Naive thymus-derived CD4-positive, alpha-beta T cell (primary cell): ENCODE measurements at regions of chr20 and their contacts with region 1.

Region 1: DNA sequence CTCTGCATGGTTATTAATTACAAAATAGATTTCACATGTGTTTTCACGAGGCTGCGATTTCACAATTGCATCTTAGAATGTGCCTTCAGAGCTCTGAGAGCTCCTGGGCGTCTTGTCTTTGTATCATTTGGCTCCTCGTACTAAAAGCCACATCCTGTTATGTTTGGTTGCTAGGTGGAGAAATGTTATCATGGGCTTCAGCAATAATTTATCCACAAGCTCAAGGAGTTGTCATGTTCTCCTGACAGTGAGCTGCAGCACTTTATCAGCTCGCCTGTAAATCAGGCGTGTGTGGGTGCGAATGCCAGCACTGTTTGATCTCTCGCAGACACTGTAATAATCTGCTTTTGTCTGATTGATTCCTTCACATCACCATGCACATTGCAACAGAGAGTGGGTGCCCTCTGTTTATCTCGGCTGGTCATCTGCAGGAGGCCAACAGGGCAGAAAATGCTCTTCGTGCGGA is 218.6 kb upstream of the ZFP64 start:
- DNase-seq: peak in 8 of 9 donors; percentile 18 to 93 (median 87)
- ATAC-seq: peak; percentile 94
- H3K4me3 ChIP-seq: peak overlapping the region; percentile 30
- H3K4me3 Mint-ChIP-seq: peak overlapping the region; percentile 63 to 87 (median 82)
- H3K27ac ChIP-seq: peak overlapping the region; percentile 94
- H3K27ac Mint-ChIP-seq: peak overlapping the region; percentile 94 to 100 (median 99)
- H3K4me1 ChIP-seq: peaks cover 68 to 73% of the 10 kb centered on the region in 2 donors
- H3K4me1 Mint-ChIP-seq: peaks cover 34 to 88% (median 76%) of the 10 kb centered on the region in 7 donors
- H3K27me3 ChIP-seq: no peaks in the 10 kb centered on the region
- H3K27me3 Mint-ChIP-seq: no peaks in the 10 kb centered on the region

Region 2: DNA sequence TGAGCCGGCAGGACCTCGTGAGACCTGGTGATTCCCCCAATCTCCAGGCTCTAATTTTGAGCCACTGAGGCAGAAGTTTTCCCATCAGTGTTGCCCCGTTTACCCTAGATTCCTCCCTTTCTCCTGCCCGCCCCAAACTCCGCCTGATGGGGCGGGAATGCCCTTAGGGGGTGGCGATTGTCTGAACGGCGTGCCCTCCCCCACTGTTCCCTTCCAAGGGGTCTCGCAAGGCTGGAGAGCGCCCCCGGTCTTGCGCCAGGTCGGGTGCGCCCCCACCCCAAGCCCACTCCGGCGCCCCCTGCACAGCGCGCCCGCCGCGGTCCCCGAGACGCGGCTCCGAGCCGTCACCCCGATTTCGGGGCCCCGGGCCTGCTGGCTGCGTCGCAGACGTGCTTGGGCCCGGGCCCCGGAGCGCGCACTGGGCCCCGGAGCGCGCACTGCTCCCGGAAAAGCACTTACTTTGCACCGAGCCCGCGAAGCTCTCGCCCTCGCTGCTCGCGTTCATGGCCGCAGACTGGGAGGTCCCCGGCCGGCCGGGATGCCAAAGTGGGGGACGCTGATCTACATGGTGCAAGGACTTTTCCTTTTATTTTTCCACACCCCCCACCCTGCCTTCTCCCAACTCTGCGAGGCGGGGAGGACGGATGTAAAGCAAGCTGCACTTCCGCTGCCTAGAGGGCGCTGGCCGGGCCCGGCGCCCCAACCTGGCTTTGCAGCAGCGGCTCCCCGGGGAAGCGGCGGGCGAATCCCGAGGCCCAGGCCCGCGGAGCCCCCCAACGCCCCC is 218.9 kb before region 1 on chr20 and contains the start of gene ZFP64:
- CTCF ChIA-PET with region 1: no interaction called
- POLR2A ChIA-PET with region 1: interaction called, 3 read pairs
- intact Hi-C with region 1: loop called in 1 of 2 experiments (anchors 2 kb)
- DNase-seq: peak; percentile 72 to 85 (median 83)
- ATAC-seq: peak; percentile 89
- H3K4me3 ChIP-seq: peak within 1 kb of the TSS; percentile 88
- H3K4me3 Mint-ChIP-seq: peak within 1 kb of the TSS; percentile 81 to 96 (median 94)
- H3K27ac ChIP-seq: peak within 1 kb of the TSS; percentile 78
- H3K27ac Mint-ChIP-seq: peak within 1 kb of the TSS; percentile 86 to 95 (median 93)
- H3K4me1 ChIP-seq: peaks cover 0 to 10% of the 10 kb centered on the region in 2 donors
- H3K4me1 Mint-ChIP-seq: peaks cover 7 to 27% (median 18%) of the 10 kb centered on the region in 7 donors
- H3K27me3 ChIP-seq: no peaks in the 10 kb centered on the region
- H3K27me3 Mint-ChIP-seq: no peaks in the 10 kb centered on the region
- total RNA-seq, gene ZFP64: 8.0 to 14.6 (median 11.6) TPM

Region 3: GRCh38 chr20:52349806-52350205 is 60.4 kb before region 1 on chr20:
- CTCF ChIA-PET with region 1: interaction called, 3 read pairs
- POLR2A ChIA-PET with region 1: interaction called, 5 read pairs
- intact Hi-C with region 1: loop called in 1 of 2 experiments (anchors 2 kb)
- DNase-seq: no peak
- ATAC-seq: no peak
- H3K4me3 ChIP-seq: no peak overlapping the region
- H3K4me3 Mint-ChIP-seq: no peak overlapping the region
- H3K27ac ChIP-seq: no peak overlapping the region
- H3K27ac Mint-ChIP-seq: peak overlapping the region in 1 of 9 donors; percentile 34
- H3K4me1 ChIP-seq: no peaks in the 10 kb centered on the region
- H3K4me1 Mint-ChIP-seq: peaks cover 0 to 15% (median 9%) of the 10 kb centered on the region in 7 donors
- H3K27me3 ChIP-seq: no peaks in the 10 kb centered on the region
- H3K27me3 Mint-ChIP-seq: peaks cover 0 to 5% (median 0%) of the 10 kb centered on the region in 5 donors

Region 4: DNA sequence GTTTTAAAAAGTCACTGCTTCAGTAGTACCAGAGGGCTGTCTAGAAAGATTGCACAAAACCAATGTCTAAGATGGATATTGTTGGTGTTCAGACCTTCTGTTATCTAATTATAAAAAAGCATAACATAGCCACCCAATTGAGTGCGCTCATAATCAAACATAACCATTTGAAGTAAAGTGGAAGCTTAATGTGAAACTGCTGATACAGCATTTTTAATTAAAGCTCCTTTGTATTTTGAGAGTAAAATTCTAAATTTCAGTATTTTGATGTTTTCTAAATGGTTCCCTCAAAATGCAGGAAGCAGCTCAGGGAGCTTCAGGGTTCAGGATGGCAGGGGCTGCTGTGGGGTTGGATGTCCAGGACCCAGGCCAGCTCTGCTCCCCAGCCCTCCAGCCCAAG is 73.2 kb after region 1 on chr20:
- CTCF ChIA-PET with region 1: no interaction called
- POLR2A ChIA-PET with region 1: no interaction called
- intact Hi-C with region 1: no loop called
- DNase-seq: no peak
- ATAC-seq: no peak
- H3K4me3 ChIP-seq: no peak overlapping the region
- H3K4me3 Mint-ChIP-seq: no peak overlapping the region
- H3K27ac ChIP-seq: no peak overlapping the region
- H3K27ac Mint-ChIP-seq: peak overlapping the region in 1 of 9 donors; percentile 45
- H3K4me1 ChIP-seq: no peaks in the 10 kb centered on the region
- H3K4me1 Mint-ChIP-seq: peaks cover 0 to 8% (median 2%) of the 10 kb centered on the region in 7 donors
- H3K27me3 ChIP-seq: no peaks in the 10 kb centered on the region
- H3K27me3 Mint-ChIP-seq: no peaks in the 10 kb centered on the region

Region 5: DNA sequence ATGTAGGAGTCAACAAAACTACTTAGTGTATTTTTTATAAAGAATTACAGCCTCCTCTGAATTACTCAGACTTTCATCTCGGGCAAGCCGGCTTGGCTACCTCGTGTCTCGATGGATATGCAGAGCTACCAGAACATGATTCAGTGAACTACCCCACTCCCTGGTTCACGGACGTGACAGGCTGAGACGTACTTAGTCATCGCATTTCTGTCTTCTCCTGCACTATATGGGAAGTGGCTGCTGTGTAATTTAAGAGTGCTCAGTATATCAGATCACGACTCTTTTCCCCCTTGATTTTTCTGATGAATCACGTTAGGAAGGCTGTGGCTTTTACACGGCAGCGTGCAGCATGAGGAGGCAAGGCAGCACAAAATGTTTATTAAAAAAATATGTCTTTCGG is 84.0 kb after region 1 on chr20:
- CTCF ChIA-PET with region 1: no interaction called
- POLR2A ChIA-PET with region 1: interaction called, 4 read pairs
- intact Hi-C with region 1: loop called in 1 of 2 experiments (anchors 1 kb)
- DNase-seq: peak in 8 of 9 donors; percentile 2 to 32 (median 18)
- ATAC-seq: peak; percentile 51
- H3K4me3 ChIP-seq: no peak overlapping the region
- H3K4me3 Mint-ChIP-seq: peak overlapping the region; percentile 17 to 89 (median 73)
- H3K27ac ChIP-seq: no peak overlapping the region
- H3K27ac Mint-ChIP-seq: peak overlapping the region in 4 of 9 donors; percentile 28 to 72 (median 65)
- H3K4me1 ChIP-seq: peaks cover 0 to 17% of the 10 kb centered on the region in 2 donors
- H3K4me1 Mint-ChIP-seq: peaks cover 9 to 23% (median 20%) of the 10 kb centered on the region in 7 donors
- H3K27me3 ChIP-seq: no peaks in the 10 kb centered on the region
- H3K27me3 Mint-ChIP-seq: peaks cover 0 to 11% (median 6%) of the 10 kb centered on the region in 5 donors

Region 6: DNA sequence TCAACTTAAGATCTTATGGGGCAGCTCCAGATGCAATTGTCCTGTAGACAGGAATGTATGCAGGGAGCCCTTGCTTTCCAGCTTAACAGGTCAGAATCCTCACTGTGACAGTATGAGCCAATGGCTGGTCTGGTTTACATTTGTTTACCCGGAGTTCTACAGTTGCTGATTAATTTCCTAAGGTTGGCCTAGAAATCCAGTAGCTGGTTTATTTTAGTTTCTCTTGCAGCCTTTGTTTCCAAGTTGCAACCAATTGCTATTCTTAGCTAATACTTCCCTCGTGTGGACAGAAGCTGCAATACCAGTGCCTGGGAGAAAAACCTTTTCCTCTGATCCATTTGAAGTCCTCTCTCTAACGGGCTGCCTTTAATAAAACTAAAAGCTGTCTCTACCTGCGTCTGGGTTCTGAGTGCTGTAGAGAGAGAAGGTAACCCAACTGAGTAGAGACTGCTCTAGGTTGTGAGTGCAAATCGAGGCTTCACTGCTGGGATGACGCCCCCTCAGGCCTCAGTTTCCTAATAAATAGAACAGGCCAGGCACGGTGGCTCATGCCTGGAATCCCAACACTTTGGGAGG is 1137.5 kb after region 1 on chr20:
- CTCF ChIA-PET with region 1: no interaction called
- POLR2A ChIA-PET with region 1: no interaction called
- intact Hi-C with region 1: loop called in 1 of 2 experiments (anchors 10 kb)
- DNase-seq: peak in 8 of 9 donors; percentile 27 to 61 (median 50)
- ATAC-seq: peak; percentile 54
- H3K4me3 ChIP-seq: no peak overlapping the region
- H3K4me3 Mint-ChIP-seq: no peak overlapping the region
- H3K27ac ChIP-seq: no peak overlapping the region
- H3K27ac Mint-ChIP-seq: no peak overlapping the region
- H3K4me1 ChIP-seq: no peaks in the 10 kb centered on the region
- H3K4me1 Mint-ChIP-seq: peaks cover 0 to 6% (median 5%) of the 10 kb centered on the region in 7 donors
- H3K27me3 ChIP-seq: no peaks in the 10 kb centered on the region
- H3K27me3 Mint-ChIP-seq: no peaks in the 10 kb centered on the region

Region 7: GRCh38 chr20:53652090-53652858 is 1242.1 kb after region 1 on chr20:
- CTCF ChIA-PET with region 1: no interaction called
- POLR2A ChIA-PET with region 1: no interaction called
- intact Hi-C with region 1: loop called in 1 of 2 experiments (anchors 10 kb)
- DNase-seq: peak in 7 of 9 donors; percentile 34 to 61 (median 46)
- ATAC-seq: peak; percentile 85
- H3K4me3 ChIP-seq: peak overlapping the region; percentile 22
- H3K4me3 Mint-ChIP-seq: peak overlapping the region; percentile 25 to 86 (median 73)
- H3K27ac ChIP-seq: peak overlapping the region; percentile 72
- H3K27ac Mint-ChIP-seq: peak overlapping the region; percentile 88 to 97 (median 95)
- H3K4me1 ChIP-seq: peaks cover 21 to 32% of the 10 kb centered on the region in 2 donors
- H3K4me1 Mint-ChIP-seq: peaks cover 23 to 50% (median 43%) of the 10 kb centered on the region in 7 donors
- H3K27me3 ChIP-seq: no peaks in the 10 kb centered on the region
- H3K27me3 Mint-ChIP-seq: no peaks in the 10 kb centered on the region